Panc1 (cell line): ENCODE measurements at regions of chrX and their contacts with region 1.

Region 1: DNA sequence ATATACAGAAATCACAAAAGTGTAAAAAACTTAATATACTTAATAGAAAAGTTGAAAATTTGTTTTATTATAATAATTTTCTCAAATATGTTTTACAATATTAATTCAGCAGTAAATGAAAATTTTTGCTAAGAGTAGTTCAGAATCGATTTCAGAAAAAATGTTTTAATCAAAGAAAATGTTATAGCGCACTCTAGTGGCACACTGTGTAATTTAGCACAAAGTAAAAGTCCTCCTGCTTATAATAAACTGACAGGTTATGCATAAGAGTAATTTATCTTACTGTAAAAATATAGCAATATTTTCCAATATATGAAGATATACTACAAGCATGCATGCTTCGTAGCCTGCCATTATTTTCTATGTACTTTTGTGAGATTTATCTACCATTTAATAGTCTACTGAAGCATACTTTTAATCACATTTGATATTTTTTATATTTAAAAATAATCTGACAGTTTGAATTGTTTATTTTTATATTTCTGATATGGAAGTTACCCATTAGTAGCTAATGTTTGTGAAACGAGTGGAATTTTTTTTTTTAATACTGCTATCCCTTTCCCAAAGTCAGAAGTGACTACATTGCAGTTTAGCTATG is 217.9 kb upstream of the KLHL4 start:
- DNase-seq: no peak
- ATAC-seq: no peak
- H3K4me3 ChIP-seq: no peak overlapping the region
- H3K27ac ChIP-seq: no peak overlapping the region
- H3K4me1 ChIP-seq: no peaks in the 10 kb centered on the region
- H3K27me3 ChIP-seq: no peaks in the 10 kb centered on the region
- CTCF ChIP-seq: peak; percentile 28; the same call in 1 of the 2 replicates

Region 2: GRCh38 chrX:86806788-86807187 is 492.9 kb before region 1 on chrX:
- CTCF ChIA-PET with region 1: no interaction called
- POLR2A ChIA-PET with region 1: no interaction called
- in situ Hi-C with region 1: no loop called
- intact Hi-C with region 1: loop called (anchors 10 kb)
- DNase-seq: peak; percentile 15
- ATAC-seq: no peak
- H3K4me3 ChIP-seq: no peak overlapping the region
- H3K27ac ChIP-seq: no peak overlapping the region
- H3K4me1 ChIP-seq: no peaks in the 10 kb centered on the region
- H3K27me3 ChIP-seq: no peaks in the 10 kb centered on the region
- CTCF ChIP-seq: peak; percentile 43

Region 3: DNA sequence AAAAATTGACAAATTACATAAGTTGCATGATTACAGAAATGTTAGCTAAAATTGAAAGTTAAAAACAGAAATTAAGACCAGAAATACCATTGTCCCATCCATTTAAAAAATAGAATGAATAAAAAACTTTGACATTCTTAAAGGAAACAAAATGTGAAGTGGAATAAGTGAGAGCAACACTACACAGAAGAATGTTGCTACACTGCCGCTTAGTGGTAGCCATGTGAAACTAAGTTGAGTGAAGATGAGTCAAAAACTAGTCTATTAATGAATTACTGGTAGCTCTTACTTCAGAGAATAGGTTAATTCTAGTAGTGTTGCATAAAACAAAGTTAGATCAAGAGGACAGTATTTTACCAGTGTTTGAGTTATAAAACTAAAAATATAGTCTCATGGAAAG is 353.1 kb before region 1 on chrX:
- CTCF ChIA-PET with region 1: no interaction called
- POLR2A ChIA-PET with region 1: no interaction called
- in situ Hi-C with region 1: no loop called
- intact Hi-C with region 1: loop called (anchors 10 kb)
- DNase-seq: peak; percentile 7
- ATAC-seq: no peak
- H3K4me3 ChIP-seq: no peak overlapping the region
- H3K27ac ChIP-seq: no peak overlapping the region
- H3K4me1 ChIP-seq: no peaks in the 10 kb centered on the region
- H3K27me3 ChIP-seq: no peaks in the 10 kb centered on the region
- CTCF ChIP-seq: peak; percentile 68; the same call in 1 of the 2 replicates

Region 4: GRCh38 chrX:87110142-87110541 is 189.5 kb before region 1 on chrX:
- CTCF ChIA-PET with region 1: no interaction called
- POLR2A ChIA-PET with region 1: no interaction called
- in situ Hi-C with region 1: no loop called
- intact Hi-C with region 1: no loop called
- DNase-seq: no peak
- ATAC-seq: no peak
- H3K4me3 ChIP-seq: no peak overlapping the region
- H3K27ac ChIP-seq: no peak overlapping the region
- H3K4me1 ChIP-seq: no peaks in the 10 kb centered on the region
- H3K27me3 ChIP-seq: no peaks in the 10 kb centered on the region
- CTCF ChIP-seq: no peak

Region 5: GRCh38 chrX:87489071-87489470 is 189.4 kb after region 1 on chrX:
- CTCF ChIA-PET with region 1: no interaction called
- POLR2A ChIA-PET with region 1: no interaction called
- in situ Hi-C with region 1: no loop called
- intact Hi-C with region 1: no loop called
- DNase-seq: no peak
- ATAC-seq: no peak
- H3K4me3 ChIP-seq: no peak overlapping the region
- H3K27ac ChIP-seq: no peak overlapping the region
- H3K4me1 ChIP-seq: no peaks in the 10 kb centered on the region
- H3K27me3 ChIP-seq: no peaks in the 10 kb centered on the region
- CTCF ChIP-seq: no peak